ENCODE measurements at regions of chr9 and their contacts with region 1.

Region 1: GRCh38 chr9:98775831-98776441 is 20.4 kb downstream of the ANKS6 start:
- DNase-seq: peak in 1 of 2 experiments; percentile 67
- H3K4me3 ChIP-seq: no peak overlapping the region
- H3K27ac ChIP-seq: no peak overlapping the region
- H3K4me1 ChIP-seq: no peaks in the 10 kb centered on the region
- H3K27me3 ChIP-seq: no peaks in the 10 kb centered on the region
- CTCF ChIP-seq: peak; percentile 52 to 86 (median 83)
- EP300 ChIP-seq: no peak
- POLR2A ChIP-seq: no peak
- RAD21 ChIP-seq: peak; percentile 79 to 86

Region 2: GRCh38 chr9:98545021-98545420 is 230.9 kb before region 1 on chr9:
- CTCF ChIA-PET with region 1: interaction called, 11 read pairs
- POLR2A ChIA-PET with region 1: no interaction called
- DNase-seq: no peak
- H3K4me3 ChIP-seq: no peak overlapping the region
- H3K27ac ChIP-seq: no peak overlapping the region
- H3K4me1 ChIP-seq: no peaks in the 10 kb centered on the region; a peak in 1 of 7 replicates
- H3K27me3 ChIP-seq: no peaks in the 10 kb centered on the region; a peak in 1 of 7 replicates
- CTCF ChIP-seq: no peak
- EP300 ChIP-seq: no peak
- POLR2A ChIP-seq: no peak
- RAD21 ChIP-seq: no peak

Region 3: DNA sequence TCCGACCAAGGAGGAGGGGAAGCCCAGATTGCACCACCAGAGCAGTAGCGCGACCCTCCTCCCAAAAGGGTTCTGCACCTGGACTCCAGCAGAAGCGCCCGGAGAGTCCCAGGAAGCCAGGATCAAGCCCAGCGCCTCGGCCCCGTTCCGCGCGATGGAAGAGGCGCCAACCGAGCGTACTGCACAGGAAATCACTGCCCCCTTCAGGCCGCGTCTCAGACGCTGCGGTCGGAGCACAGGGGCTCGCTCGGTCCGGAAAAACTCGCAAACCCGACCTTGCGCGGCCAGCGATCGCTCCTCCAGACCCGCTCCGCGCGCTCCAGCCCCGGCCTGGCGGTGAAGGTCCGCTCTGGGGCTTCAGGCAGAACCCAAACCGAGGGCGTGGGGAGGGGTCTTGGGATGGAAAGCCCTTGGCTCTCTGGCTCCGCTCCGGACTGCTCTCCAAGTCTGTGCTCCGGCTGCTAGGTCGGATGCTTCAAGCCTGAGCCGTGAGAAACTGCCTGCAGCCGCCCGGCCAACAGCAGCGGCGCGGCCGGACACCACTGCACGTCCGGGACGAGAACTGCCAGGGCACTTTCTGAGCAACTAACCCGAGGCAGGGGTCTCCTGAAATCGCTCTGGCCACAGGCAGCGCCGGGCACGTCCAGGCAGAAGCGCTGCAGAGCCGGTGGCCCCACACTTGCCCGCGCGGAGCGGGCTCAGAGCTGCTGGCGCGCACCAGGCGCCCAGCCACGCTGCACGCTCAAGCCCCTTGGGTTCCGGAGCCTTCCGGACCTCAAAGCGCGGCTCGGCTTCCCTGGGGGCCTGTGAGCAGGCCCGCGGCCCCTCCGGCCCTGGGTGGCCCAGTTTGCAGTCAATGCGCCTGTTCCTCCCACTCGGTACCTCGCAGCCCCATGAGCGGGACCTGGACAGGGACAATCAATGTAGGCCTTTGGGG is 68.5 kb before region 1 on chr9:
- CTCF ChIA-PET with region 1: interaction called, 15 read pairs
- POLR2A ChIA-PET with region 1: no interaction called
- DNase-seq: peak; percentile 73 to 86
- H3K4me3 ChIP-seq: peak overlapping the region in 3 of 4 experiments; percentile 29 to 55 (median 52); a peak in 6 of 8 replicates
- H3K27ac ChIP-seq: no peak overlapping the region
- H3K4me1 ChIP-seq: peaks cover 0 to 11% (median 5%) of the 10 kb centered on the region in 4 experiments; a peak in 5 of 7 replicates
- H3K27me3 ChIP-seq: peaks cover 44 to 70% (median 61%) of the 10 kb centered on the region in 4 experiments
- CTCF ChIP-seq: peak; percentile 86 to 89 (median 87)
- EP300 ChIP-seq: no peak
- POLR2A ChIP-seq: no peak
- RAD21 ChIP-seq: peak; percentile 85 to 91

Region 4: DNA sequence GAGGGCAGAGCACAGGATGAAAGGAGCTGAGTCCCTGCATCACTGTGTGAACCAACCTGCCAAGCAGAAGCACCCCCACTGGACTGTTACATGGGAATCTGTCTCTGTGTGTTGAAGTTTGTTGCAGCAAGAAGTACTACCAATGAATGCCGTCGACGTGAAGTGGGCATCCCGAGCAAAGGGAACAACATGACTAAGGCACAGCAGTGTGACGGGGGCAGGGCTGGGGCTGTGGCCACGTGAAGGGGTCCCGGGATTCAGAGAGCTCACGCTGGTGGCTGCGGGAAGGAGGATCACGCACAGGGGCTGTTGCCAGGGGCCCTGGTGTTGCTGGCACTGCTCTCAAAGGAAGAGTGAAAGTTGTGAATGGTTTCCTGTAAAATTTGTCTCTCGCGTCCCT is 39.7 kb before region 1 on chr9:
- CTCF ChIA-PET with region 1: interaction called, 23 read pairs
- POLR2A ChIA-PET with region 1: no interaction called
- DNase-seq: no peak
- H3K4me3 ChIP-seq: no peak overlapping the region
- H3K27ac ChIP-seq: no peak overlapping the region
- H3K4me1 ChIP-seq: peaks cover 0 to 3% (median 0%) of the 10 kb centered on the region in 4 experiments; a peak in 2 of 7 replicates
- H3K27me3 ChIP-seq: no peaks in the 10 kb centered on the region
- CTCF ChIP-seq: no peak
- EP300 ChIP-seq: no peak
- POLR2A ChIP-seq: no peak
- RAD21 ChIP-seq: no peak

Region 5: GRCh38 chr9:98755006-98755575 is 20.8 kb before region 1 on chr9:
- CTCF ChIA-PET with region 1: interaction called, 27 read pairs
- POLR2A ChIA-PET with region 1: interaction called, 5 read pairs
- DNase-seq: no peak
- H3K4me3 ChIP-seq: no peak overlapping the region
- H3K27ac ChIP-seq: no peak overlapping the region
- H3K4me1 ChIP-seq: no peaks in the 10 kb centered on the region
- H3K27me3 ChIP-seq: no peaks in the 10 kb centered on the region
- CTCF ChIP-seq: peak in 2 of 3 experiments; percentile 12 to 39; a peak in 2 of 4 replicates
- EP300 ChIP-seq: no peak
- POLR2A ChIP-seq: no peak
- RAD21 ChIP-seq: no peak

Region 6: DNA sequence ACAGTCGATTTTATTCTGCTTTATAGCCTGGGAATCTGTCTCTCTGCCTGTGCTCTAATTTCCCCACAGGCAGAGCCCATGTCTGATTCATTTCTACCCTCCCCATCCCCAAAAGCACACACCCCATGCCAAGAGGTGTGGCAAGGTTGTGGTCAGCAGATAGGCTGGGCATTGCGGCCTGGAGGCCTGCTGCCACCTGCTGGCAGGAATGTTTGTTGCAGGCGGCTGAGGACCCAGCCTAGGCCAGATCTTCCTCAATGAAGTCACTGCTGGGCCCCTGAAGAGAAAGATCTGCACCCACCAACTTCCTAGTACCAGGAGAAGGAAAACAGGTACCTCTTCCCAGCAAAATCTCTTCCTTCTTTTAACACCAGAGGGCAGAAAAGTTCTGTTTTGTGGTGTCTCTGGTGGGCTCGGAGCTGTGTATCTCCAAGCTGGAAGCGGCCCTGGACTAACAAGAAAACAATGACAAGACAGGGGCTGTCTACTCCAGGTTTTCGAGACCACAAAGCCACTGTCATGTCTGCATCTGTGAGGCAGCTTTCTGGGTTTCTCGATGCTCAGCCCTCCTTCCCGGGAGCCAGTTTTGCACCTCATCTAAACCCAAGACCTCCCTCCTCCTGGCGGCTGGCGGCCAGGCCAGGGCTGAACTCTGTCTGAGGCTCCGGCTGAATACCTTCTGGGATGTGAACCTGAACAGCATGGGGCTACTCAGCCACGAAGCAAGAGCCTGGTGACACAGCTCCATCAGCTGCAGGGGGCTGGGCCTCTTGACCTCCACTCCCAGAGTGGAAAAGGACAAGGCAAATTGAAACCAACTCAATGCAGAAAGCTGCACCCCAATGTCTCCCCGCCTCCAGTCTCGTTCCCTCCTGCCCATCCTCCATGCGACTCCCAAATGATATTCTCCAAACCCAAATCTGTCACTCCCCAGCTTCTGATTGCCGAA is 15.5 kb after region 1 on chr9:
- CTCF ChIA-PET with region 1: interaction called, 38 read pairs
- POLR2A ChIA-PET with region 1: interaction called, 3 read pairs
- DNase-seq: peak; percentile 80 to 93
- H3K4me3 ChIP-seq: no peak overlapping the region
- H3K27ac ChIP-seq: peak overlapping the region; percentile 14; the same call in 1 of the 2 replicates
- H3K4me1 ChIP-seq: peaks cover 5 to 18% (median 8%) of the 10 kb centered on the region in 4 experiments
- H3K27me3 ChIP-seq: no peaks in the 10 kb centered on the region
- CTCF ChIP-seq: peak; percentile 80 to 98 (median 96)
- EP300 ChIP-seq: no peak; a peak in 1 of 3 replicates
- POLR2A ChIP-seq: no peak
- RAD21 ChIP-seq: peak; percentile 34 to 53

Measured in H1 (cell line).